AG04449 (cell line): ENCODE measurements at regions of chrX and their contacts with region 1.

Region 1: DNA sequence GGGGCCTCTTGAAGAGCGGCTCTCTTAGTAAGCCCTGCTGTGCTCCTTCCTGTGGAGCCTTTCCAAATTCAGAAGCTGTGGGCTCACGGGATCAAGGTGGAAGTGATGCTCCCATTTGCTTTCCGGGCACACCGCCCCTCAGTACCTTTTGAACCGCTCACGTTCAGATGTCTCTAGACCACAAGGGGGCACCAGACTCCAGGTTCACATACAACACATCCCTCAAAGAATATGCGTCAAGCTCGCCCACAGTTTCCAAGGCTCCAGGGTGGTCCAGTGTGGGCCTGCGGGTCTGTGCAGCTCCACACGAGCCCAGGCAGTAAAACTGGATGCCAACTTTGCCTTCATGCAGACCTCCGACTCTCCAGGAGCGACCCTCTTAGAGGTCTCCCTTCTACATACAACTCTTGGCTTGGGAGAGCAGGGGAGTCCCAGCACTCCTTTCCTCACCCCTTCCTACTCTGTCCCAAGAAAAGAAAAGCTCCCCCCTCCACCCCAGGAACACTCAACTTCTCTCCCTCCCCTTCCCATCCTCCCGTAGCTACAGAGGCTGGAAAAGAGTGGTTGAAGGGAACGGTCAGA is 11.0 kb downstream of the SUPT20HL1 start:
- DNase-seq: no peak
- H3K4me3 ChIP-seq: no peak overlapping the region
- CTCF ChIP-seq: peak; percentile 55

Region 2: GRCh38 chrX:24259544-24260240 is 111.8 kb before region 1 on chrX:
- CTCF ChIA-PET with region 1: interaction called, 24 read pairs
- POLR2A ChIA-PET with region 1: no interaction called
- DNase-seq: no peak
- H3K4me3 ChIP-seq: no peak overlapping the region
- CTCF ChIP-seq: peak; percentile 45

Region 3: GRCh38 chrX:24294620-24295019 is 76.9 kb before region 1 on chrX:
- CTCF ChIA-PET with region 1: interaction called, 12 read pairs
- POLR2A ChIA-PET with region 1: no interaction called
- DNase-seq: no peak
- H3K4me3 ChIP-seq: no peak overlapping the region
- CTCF ChIP-seq: no peak

Region 4: DNA sequence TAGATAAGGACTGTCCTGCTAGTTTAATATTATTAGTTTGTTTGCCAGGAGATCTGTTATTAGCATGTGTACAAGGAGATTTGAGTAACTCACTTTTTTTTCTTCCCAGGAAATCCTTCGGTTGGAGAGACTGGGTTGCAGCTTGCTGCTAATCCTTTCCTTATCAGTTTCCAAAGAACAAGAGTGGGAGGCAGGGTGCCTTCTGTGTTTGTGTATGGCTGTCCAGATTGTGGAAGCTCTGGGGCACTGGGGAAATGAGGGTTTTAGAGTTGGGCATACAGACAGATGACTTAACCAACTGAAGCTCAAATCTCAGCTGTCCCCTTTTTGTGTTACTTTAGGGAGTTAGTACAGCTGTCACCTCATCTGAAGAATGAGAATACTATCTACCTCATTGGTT is 23.6 kb before region 1 on chrX:
- CTCF ChIA-PET with region 1: interaction called, 12 read pairs
- POLR2A ChIA-PET with region 1: no interaction called
- DNase-seq: no peak
- H3K4me3 ChIP-seq: no peak overlapping the region
- CTCF ChIP-seq: no peak

Region 5: DNA sequence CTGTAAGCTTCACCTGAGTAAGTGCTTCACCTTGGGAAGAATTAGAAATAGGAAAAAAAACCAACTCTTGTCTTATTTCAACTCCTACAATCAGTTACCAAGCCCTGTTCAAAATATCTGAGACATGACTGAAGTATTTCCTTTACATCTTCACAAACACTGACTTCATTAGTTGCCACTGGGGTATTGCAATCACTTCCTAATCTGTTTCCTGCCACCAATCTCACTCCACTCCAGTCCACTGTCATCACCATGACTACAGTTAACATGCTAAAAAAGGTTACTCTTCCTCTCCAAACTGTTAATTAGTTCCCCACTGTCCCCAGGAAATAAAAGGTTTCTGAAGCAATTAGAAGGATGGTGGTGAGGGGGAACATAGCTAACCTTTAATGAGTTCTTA is 14.4 kb before region 1 on chrX:
- CTCF ChIA-PET with region 1: interaction called, 12 read pairs
- POLR2A ChIA-PET with region 1: no interaction called
- DNase-seq: no peak
- H3K4me3 ChIP-seq: no peak overlapping the region
- CTCF ChIP-seq: no peak